Activated CD4-positive, alpha-beta memory T cell treated with anti-CD3 and anti-CD28 coated beads for 36 hours (primary cell): ENCODE measurements at regions of chr10 and their contacts with region 1.

Region 1: DNA sequence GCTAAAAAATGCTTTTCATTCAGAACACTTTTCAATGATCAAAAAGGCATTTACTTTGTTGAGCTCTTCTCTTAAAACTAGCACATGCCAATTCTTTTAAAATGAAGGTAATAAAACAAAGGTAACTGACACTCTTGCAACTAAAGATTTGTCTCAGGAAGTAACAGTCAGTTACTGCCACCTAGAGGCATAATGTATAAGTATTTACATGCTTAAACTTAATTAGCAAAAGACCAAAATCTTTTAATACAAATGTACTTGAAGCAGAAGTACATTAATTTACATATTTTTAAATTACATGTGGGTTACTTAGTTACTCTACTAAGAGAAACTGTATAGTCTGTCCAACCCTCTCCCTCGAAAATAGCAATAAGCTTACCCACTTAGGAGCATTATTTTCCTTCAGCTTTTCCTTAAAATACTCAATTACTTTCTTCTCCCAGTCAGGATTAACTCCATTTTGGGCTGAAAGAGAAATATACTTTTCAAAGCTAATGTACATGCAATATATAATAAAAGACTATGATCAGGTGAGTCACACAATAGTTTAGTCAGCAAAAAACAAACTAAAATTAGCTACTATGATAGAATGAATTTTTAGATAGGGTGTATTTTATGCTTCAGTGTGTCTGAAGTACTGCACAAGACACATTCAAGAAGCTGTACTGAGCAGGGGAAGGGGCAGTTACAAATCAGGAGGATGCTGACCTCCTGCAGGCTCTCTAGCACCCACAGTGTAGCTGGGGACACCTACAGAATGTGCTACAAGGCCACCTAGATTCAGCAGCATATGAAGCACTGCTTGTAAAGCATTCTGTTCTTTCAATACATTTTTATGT is 13.0 kb downstream of the MCMBP start:
- DNase-seq: no peak
- H3K4me3 Mint-ChIP-seq: no peak overlapping the region
- H3K27ac Mint-ChIP-seq: no peak overlapping the region
- H3K4me1 Mint-ChIP-seq: peaks cover 42% of the 10 kb centered on the region
- H3K27me3 Mint-ChIP-seq: no peaks in the 10 kb centered on the region

Region 2: DNA sequence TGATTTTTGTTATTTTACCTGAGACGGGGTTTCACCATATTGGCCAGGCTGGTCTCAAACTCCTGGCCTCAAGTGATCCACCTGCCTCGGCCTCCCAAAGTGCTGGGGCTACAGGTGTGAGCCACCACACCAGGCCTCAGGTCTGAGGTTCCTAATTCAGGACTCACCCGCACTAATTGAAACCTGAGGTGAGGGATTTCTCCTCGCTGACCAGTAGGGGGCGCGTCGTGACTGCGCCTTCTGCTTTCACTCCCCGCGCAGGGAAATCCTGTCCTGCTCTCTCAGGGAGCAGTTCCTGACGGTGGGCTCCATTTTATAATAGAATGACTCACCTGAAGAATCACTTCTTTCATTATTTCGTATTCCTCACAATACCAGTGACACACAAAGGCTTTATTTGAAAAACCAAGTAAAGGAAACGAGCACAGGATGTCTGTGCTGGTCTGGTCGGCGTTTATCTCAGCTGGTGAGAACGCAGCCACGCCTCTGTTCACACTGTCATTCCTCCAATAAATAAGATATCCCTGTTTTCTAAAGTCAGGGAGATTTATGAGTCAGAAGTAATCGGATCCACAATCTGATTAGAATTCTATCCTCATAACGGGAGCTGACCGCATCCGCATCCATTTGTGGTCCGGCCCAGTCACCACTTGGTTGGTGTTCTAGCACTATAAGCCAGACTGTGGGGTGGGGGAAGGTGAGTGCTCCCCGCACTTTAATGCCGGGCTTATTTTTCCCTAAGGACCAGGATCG is 173.0 kb before region 1 on chr10:
- CTCF ChIA-PET with region 1: interaction called, 62 read pairs
- POLR2A ChIA-PET with region 1: no interaction called
- intact Hi-C with region 1: loop called (anchors 1 kb)
- DNase-seq: peak; percentile 90
- H3K4me3 Mint-ChIP-seq: peak overlapping the region; percentile 25
- H3K27ac Mint-ChIP-seq: peak overlapping the region; percentile 30
- H3K4me1 Mint-ChIP-seq: peaks cover 21% of the 10 kb centered on the region
- H3K27me3 Mint-ChIP-seq: no peaks in the 10 kb centered on the region

Region 3: GRCh38 chr10:119737827-119738226 is 121.8 kb before region 1 on chr10:
- CTCF ChIA-PET with region 1: interaction called, 12 read pairs
- POLR2A ChIA-PET with region 1: no interaction called
- intact Hi-C with region 1: no loop called
- DNase-seq: peak; percentile 33
- H3K4me3 Mint-ChIP-seq: no peak overlapping the region
- H3K27ac Mint-ChIP-seq: peak overlapping the region; percentile 33
- H3K4me1 Mint-ChIP-seq: peaks cover 40% of the 10 kb centered on the region
- H3K27me3 Mint-ChIP-seq: no peaks in the 10 kb centered on the region

Region 4: GRCh38 chr10:119761106-119761505 is 98.5 kb before region 1 on chr10:
- CTCF ChIA-PET with region 1: interaction called, 10 read pairs
- POLR2A ChIA-PET with region 1: no interaction called
- intact Hi-C with region 1: no loop called
- DNase-seq: no peak
- H3K4me3 Mint-ChIP-seq: no peak overlapping the region
- H3K27ac Mint-ChIP-seq: no peak overlapping the region
- H3K4me1 Mint-ChIP-seq: peaks cover 11% of the 10 kb centered on the region
- H3K27me3 Mint-ChIP-seq: no peaks in the 10 kb centered on the region

Region 5: DNA sequence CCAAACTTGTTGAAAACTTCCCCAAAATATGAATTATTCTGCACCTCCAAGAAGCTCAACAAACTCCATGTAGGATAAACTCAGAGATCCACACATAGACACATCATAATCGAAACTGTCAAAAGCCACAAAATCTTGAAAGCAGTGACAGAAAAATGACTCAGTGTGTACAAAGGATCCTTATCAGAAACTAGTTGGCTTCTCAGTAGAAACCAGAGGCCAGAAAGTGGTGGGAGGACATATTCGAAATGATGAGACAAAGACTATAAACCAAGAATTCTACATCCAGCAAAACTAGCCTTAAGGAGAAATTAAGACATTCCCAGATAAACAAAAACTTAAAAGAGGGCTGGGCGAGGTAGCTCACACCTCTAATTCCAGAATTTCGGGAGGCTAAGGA is 25.5 kb before region 1 on chr10:
- CTCF ChIA-PET with region 1: interaction called, 19 read pairs
- POLR2A ChIA-PET with region 1: interaction called, 4 read pairs
- intact Hi-C with region 1: no loop called
- DNase-seq: no peak
- H3K4me3 Mint-ChIP-seq: no peak overlapping the region
- H3K27ac Mint-ChIP-seq: peak overlapping the region; percentile 52
- H3K4me1 Mint-ChIP-seq: peaks cover 43% of the 10 kb centered on the region
- H3K27me3 Mint-ChIP-seq: no peaks in the 10 kb centered on the region

Region 6: GRCh38 chr10:119892188-119893065 is 32.8 kb after region 1 on chr10 and contains the start of gene SEC23IP:
- CTCF ChIA-PET with region 1: interaction called, 10 read pairs
- POLR2A ChIA-PET with region 1: no interaction called
- intact Hi-C with region 1: no loop called
- DNase-seq: peak; percentile 96
- H3K4me3 Mint-ChIP-seq: peak within 1 kb of the TSS; percentile 98
- H3K27ac Mint-ChIP-seq: peak within 1 kb of the TSS; percentile 97
- H3K4me1 Mint-ChIP-seq: peaks cover 39% of the 10 kb centered on the region
- H3K27me3 Mint-ChIP-seq: no peaks in the 10 kb centered on the region
- total RNA-seq, gene SEC23IP: 62.4 to 63.6 TPM